CD8-positive, alpha-beta memory T cell (primary cell): ENCODE measurements at regions of chr3 and their contacts with region 1.

Region 1: GRCh38 chr3:66490214-66490613 is 10.6 kb downstream of the LRIG1 start:
- DNase-seq: no peak
- H3K4me3 ChIP-seq: peak overlapping the region; percentile 19
- H3K4me3 Mint-ChIP-seq: peak overlapping the region; percentile 32 to 81 (median 74)
- H3K27ac ChIP-seq: no peak overlapping the region
- H3K27ac Mint-ChIP-seq: peak overlapping the region; percentile 16 to 91 (median 86)
- H3K4me1 ChIP-seq: peaks cover 88% of the 10 kb centered on the region
- H3K4me1 Mint-ChIP-seq: peaks cover 75 to 97% (median 89%) of the 10 kb centered on the region in 3 donors
- H3K27me3 ChIP-seq: no peaks in the 10 kb centered on the region
- H3K27me3 Mint-ChIP-seq: no peaks in the 10 kb centered on the region

Region 2: DNA sequence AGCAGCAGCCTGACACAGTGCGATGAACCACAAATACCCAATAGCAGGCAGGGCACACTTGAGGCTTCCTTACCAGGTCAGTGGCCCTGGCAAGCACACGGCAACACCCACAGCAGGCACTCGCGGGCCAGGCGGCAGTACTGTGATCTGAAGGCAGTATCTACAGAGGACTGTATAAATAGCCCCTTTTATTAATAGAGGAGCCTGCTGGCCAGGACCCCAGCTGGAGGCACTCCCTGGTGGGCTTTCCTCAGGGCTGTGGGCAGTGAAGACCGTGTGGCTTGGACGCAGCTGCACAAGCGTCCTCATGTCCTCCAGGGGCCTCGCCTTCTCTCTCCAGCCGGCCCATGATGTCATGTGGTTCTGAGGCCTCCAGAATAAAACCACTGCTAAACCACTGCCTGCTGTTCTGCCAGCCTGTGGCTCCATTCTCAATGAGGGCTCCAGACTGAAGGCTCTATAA is 33.5 kb before region 1 on chr3:
- CTCF ChIA-PET with region 1: no interaction called
- POLR2A ChIA-PET with region 1: no interaction called
- DNase-seq: peak in 2 of 5 donors; percentile 3 to 28
- H3K4me3 ChIP-seq: no peak overlapping the region
- H3K4me3 Mint-ChIP-seq: peak overlapping the region in 4 of 7 donors; percentile 3 to 56 (median 46)
- H3K27ac ChIP-seq: no peak overlapping the region
- H3K27ac Mint-ChIP-seq: peak overlapping the region in 4 of 8 donors; percentile 46 to 59 (median 54)
- H3K4me1 ChIP-seq: no peaks in the 10 kb centered on the region
- H3K4me1 Mint-ChIP-seq: peaks cover 25 to 41% (median 33%) of the 10 kb centered on the region in 3 donors
- H3K27me3 ChIP-seq: no peaks in the 10 kb centered on the region
- H3K27me3 Mint-ChIP-seq: no peaks in the 10 kb centered on the region

Region 3: DNA sequence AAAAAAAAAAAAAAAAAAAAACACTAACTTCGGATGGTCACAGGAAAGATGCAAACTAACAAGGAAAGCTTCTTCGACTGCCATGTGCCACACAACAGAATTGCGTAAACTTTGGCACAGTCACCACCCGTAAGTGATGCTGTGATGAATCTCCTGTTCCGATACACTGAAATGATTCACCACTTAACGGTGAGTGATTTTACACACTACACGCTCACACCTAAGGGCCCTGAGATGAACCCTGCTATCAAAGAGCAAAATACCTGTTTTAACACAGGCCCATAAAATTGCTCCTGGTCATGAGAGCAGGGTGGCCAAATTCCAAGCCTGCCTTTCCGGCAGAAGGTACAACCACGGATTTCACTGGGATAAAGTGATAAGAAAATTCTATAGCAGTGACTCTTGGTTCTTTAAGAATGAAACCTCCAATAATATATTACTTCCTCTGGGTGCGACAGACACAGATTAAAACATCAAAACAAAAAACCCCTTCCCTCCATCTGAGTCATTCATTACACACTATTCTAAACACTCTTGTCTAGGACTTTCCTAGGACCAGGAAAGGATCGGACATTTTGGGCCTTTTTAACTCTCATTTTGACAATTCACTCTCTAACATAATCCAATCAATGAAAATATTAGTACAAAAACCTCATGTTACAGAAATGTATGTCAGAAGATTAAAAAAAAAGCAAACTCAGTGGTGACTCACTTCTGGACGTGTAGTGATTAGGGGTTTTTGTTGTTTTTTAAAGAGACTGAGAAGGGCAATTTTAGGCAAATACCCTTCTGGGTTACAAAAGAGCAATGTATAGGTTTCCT is 17.7 kb before region 1 on chr3:
- CTCF ChIA-PET with region 1: interaction called, 12 read pairs
- POLR2A ChIA-PET with region 1: no interaction called
- DNase-seq: peak in 1 of 5 donors; percentile 52
- H3K4me3 ChIP-seq: peak overlapping the region; percentile 31
- H3K4me3 Mint-ChIP-seq: peak overlapping the region; percentile 49 to 81 (median 73)
- H3K27ac ChIP-seq: no peak overlapping the region
- H3K27ac Mint-ChIP-seq: peak overlapping the region; percentile 0 to 90 (median 65)
- H3K4me1 ChIP-seq: peaks cover 23% of the 10 kb centered on the region
- H3K4me1 Mint-ChIP-seq: peaks cover 30 to 43% (median 36%) of the 10 kb centered on the region in 3 donors
- H3K27me3 ChIP-seq: no peaks in the 10 kb centered on the region
- H3K27me3 Mint-ChIP-seq: no peaks in the 10 kb centered on the region

Region 4: DNA sequence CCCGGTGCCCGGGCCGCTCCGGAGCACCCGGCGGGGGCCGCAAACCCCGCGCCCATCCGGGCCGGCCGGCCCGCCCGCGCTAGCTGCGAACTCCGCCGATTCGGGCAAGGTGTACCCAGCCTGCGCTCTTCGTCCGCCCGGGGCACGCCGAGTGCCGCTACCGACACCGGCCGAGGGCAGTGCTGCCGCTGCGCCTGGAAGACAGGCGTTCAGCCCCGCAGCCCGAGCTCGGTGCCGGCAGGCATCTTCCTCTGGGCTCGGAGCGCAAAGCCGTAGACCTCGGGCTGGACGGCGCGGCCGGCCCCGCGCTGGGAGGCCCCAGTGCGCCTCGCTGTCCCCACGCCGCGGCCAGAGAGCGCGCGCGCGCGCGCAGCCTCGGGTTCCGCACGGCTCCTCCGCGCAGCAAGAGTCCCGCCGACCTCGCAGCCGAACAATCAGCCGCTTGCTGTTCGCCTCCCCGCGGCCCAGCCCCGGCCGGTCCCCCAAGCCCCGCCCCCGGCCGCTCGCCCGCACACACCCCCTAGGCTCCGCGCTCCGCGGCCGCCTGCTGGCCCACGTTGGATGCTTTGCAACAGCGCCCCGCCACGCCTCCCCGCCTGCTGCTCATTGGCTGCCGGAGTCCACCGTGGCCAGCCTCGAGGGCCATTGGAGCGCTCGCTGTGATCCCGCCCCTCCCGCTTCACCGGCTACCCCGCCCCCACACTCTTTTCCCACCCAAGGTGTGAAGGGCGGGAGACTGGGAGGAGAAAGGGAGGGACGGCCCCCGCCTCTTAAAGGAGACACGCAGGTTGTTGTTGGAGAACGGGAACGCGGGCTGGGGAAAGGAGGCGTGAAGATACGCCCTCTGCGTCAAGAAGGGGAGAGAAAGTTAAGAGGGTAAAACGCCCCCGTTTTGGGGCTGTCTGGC is 10.6 kb after region 1 on chr3 and contains the start of gene LRIG1:
- CTCF ChIA-PET with region 1: interaction called, 4 read pairs
- POLR2A ChIA-PET with region 1: interaction called, 11 read pairs
- DNase-seq: peak; percentile 90 to 98 (median 97)
- H3K4me3 ChIP-seq: peak within 1 kb of the TSS; percentile 68
- H3K4me3 Mint-ChIP-seq: peak within 1 kb of the TSS; percentile 90 to 98 (median 95)
- H3K27ac ChIP-seq: peak within 1 kb of the TSS; percentile 55
- H3K27ac Mint-ChIP-seq: peak within 1 kb of the TSS; percentile 55 to 93 (median 86)
- H3K4me1 ChIP-seq: peaks cover 46% of the 10 kb centered on the region
- H3K4me1 Mint-ChIP-seq: peaks cover 62 to 70% (median 65%) of the 10 kb centered on the region in 3 donors
- H3K27me3 ChIP-seq: no peaks in the 10 kb centered on the region
- H3K27me3 Mint-ChIP-seq: no peaks in the 10 kb centered on the region
- total RNA-seq, gene LRIG1: 37.9 to 38.2 TPM